ENCODE measurements at regions of chr1 and their contacts with region 1.

Region 1: DNA sequence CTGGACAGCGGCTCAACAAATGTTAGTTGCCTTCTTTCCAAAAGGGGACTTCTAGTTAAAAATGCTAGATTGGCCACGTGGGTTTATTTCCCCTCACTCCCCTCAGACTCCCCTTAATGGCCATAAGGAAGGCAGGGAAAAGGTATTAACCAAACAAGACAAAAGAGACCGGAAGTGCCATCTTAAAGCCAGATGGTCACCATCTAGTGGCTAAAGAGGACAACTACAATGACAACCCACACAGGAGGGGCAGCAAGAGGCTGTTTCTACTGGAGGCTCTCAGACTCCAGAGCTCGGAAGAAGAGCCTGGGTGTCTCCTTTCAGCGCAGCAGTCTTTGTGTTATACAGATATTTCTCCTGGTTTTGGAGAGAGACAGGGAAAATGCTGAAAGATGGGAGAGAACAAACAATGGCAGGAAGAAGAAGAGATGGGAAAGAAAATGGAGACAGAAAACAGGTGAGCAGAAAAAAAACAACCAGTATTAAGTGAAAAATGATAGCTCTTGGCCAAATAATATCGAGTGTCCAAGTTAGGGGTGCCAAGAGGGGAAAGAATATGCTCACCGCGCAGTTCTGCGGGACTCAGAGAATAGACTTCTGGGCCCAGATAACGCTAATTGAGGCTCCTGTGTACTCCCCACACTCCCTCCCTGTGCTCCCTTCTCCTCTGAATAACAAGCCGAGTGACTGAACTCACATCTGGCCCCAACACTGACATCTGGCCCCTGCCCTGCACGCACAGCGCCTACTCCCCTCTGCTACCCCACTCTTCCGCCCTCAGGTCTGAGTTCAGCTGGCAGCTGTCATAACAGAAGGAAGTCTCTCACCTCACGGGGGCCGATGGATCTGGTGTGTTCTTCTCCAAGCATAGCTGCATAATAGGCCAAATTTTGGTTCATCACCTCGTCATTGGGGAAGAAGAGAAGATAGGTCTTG is 9.6 kb downstream of the P3H1 start:
- DNase-seq: no peak
- H3K4me3 ChIP-seq: no peak overlapping the region
- CTCF ChIP-seq: peak; percentile 68

Region 2: GRCh38 chr1:42576935-42577334 is 180.3 kb before region 1 on chr1:
- CTCF ChIA-PET with region 1: interaction called, 11 read pairs
- POLR2A ChIA-PET with region 1: no interaction called
- DNase-seq: no peak
- H3K4me3 ChIP-seq: no peak overlapping the region
- CTCF ChIP-seq: no peak

Region 3: GRCh38 chr1:42822800-42823392 is 65.7 kb after region 1 on chr1:
- CTCF ChIA-PET with region 1: no interaction called
- POLR2A ChIA-PET with region 1: no interaction called
- DNase-seq: no peak
- H3K4me3 ChIP-seq: no peak overlapping the region
- CTCF ChIP-seq: no peak

Measured in AG04449 (cell line).